Left ventricle myocardium superior (tissue), 1 donor: ENCODE measurements at regions of chr12 and their contacts with region 1.

Region 1: DNA sequence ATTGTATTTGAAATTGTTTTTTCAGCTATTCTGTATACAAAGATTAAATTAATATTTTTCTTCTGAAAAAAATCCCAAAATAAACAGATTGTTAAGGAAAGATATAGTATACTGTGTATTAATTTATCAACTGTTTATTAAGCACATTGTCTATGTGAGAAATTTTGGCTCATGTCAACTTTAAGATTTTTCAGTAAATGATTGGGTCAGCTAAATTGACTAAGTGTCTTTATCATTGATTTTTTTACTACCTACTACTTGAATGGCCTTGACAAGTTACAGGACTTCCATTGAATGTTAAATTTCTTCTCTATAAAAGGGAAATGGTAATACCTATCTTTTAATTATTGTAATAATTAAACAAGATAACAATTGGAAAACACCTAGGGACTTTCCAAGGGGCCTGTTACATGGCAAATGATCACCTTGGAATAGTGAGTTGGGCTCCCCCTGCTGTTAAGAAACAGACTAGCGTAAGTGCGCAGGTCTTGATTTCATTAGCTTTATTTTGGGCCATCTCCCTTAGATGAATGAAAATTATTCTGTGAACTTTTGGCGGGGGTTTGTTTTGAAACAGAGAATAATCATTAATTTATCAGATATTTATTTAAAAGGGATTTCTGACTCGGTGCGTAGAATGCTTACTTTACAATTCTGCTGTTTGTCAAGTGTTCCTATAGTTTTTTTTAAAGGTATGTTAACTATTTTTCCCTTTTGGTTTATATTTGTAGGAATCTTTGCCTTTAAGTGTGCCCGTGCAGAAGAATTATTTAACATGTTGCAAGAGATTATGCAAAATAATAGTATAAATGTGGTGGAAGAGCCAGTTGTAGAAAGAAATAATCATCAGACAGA is 14.5 kb upstream of the CCT2 start:
- DNase-seq: peak; percentile 35
- ATAC-seq: peak; percentile 77

Region 2: GRCh38 chr12:69359531-69360347 is 211.0 kb before region 1 on chr12 and contains the start of gene YEATS4:
- intact Hi-C with region 1: loop called (anchors 5 kb)
- DNase-seq: peak; percentile 95
- ATAC-seq: peak; percentile 99
- total RNA-seq, gene YEATS4: 12.8 TPM

Region 3: DNA sequence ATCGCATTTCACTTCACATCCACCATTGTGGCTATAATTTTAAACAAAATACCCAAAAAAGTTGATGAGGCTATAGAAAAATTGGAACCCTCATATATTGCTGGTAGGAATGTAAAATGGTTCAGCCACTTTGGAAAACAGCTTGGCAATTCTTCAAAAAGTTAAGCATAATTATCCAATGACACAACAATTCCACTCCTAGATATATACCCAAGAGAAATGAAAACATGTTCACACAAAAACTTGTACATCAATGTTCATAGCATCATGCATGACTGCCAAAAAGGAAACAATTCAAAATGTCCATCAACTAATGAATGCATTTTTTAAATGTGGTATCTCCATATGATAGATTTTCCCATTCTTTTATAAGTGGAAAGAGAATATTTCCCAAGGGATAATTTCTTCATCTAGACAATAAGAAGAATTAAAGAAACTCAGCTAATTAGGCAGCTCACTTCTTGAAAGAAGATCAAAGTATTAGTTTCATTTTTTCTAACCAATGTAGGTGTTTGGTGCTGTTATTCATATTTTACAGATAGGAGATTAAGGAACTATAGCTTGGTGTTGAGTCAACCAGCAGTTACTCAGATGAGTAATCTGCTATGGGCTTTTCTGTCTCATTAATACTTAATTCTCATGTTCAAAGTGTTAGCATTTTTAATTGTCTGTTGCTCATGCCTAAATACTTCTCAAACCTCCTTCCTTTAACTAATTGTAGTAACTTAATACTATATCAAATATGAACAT is 178.4 kb before region 1 on chr12:
- intact Hi-C with region 1: loop called (anchors 10 kb)
- DNase-seq: no peak
- ATAC-seq: no peak

Region 4: GRCh38 chr12:69708649-69709048 is 137.9 kb after region 1 on chr12:
- intact Hi-C with region 1: no loop called
- DNase-seq: no peak
- ATAC-seq: no peak